ENCODE measurements at regions of chr10 and their contacts with region 1.

Region 1: GRCh38 chr10:6401562-6402348 is 178.3 kb downstream of the PRKCQ start:
- DNase-seq: peak; percentile 85
- CTCF ChIP-seq: peak; percentile 88

Region 2: DNA sequence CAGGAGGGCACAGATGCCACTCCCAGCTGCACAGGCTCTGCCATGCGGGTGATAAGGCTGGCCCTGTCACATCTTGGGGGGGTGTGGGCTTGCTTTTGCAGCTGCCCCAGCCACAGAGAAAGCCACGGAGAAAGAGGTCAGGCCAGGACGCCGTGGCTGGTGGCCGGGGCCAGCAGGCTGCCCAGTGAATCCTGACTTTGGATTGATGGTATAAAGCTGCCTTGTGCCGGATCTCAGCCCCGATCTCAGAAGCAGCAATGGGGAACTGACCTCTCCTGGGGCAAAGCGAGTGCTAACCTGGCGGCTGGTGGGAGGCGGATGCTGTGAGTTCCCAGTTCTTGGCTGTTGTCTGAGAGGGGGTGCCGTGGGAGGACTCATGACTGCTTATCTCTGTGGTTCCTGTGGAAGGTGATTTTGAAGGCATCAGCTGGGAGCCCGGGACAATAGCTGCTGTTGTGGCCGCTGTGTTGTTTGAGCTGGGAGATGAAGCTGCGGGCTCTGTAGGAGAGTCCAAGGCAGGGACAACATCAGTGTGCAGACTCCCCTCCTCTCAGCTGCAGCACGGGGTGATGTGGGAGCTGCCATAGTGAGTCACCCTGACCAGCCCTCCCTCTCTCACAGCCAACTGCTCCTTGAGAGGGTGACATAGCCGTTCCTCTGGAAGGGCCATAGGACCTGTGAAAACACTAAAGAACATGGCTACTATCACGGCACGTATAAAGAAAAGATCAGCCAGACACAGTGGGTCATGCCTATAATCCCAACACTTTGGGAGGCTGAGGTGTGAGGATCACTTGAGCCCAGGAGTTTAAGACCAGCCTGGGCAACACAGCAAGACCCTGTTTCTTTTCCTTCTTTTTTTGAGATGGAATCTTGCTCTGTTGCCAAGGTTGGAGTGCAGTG is 441.4 kb before region 1 on chr10:
- CTCF ChIA-PET with region 1: no interaction called
- POLR2A ChIA-PET with region 1: no interaction called
- DNase-seq: no peak
- CTCF ChIP-seq: no peak

Region 3: GRCh38 chr10:6088721-6089390 is 312.9 kb before region 1 on chr10 and contains the start of gene RBM17:
- CTCF ChIA-PET with region 1: interaction called, 28 read pairs
- POLR2A ChIA-PET with region 1: no interaction called
- DNase-seq: peak; percentile 95
- CTCF ChIP-seq: peak; percentile 100

Region 4: GRCh38 chr10:6151087-6151977 is 250.4 kb before region 1 on chr10:
- CTCF ChIA-PET with region 1: interaction called, 29 read pairs
- POLR2A ChIA-PET with region 1: no interaction called
- DNase-seq: peak; percentile 78
- CTCF ChIP-seq: peak; percentile 71

Region 5: GRCh38 chr10:6195846-6196245 is 205.9 kb before region 1 on chr10:
- CTCF ChIA-PET with region 1: interaction called, 136 read pairs
- POLR2A ChIA-PET with region 1: interaction called, 4 read pairs
- DNase-seq: no peak
- CTCF ChIP-seq: no peak

Region 6: GRCh38 chr10:6218692-6219493 is 182.9 kb before region 1 on chr10:
- CTCF ChIA-PET with region 1: interaction called, 11 read pairs
- POLR2A ChIA-PET with region 1: no interaction called
- DNase-seq: no peak
- CTCF ChIP-seq: no peak

Region 7: DNA sequence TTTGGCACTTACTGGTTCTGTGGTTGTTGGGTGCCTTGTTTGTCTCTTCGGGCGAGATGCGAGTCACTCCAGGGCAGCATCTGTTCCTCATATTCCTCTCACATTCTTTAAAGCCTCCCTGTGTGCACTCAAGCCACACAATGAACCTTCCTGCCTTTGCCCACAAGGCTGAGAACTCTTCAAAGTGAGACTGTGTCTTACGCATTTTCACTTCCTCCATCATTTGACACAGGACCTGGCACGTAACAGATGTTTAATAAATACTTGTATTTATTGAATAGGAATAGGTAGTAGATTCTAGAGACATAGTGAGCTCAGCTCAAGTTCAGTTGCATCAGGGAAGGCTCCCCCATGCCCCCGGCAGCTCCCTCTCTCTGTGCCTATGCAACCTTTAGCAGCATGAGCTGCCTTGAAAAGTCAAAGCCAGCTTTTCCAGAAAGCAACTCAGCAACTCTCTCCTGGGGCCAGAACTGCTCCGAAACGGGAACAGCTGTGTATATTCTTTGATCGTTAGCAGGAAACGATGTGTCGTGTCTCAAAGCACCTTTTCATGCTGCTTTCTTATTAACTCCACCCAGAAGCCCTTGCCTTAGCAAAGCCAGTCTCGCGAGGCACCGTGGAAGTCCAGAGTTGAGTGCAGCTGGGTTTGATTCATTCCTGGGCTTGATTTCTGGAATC is 101.5 kb before region 1 on chr10:
- CTCF ChIA-PET with region 1: interaction called, 14 read pairs
- POLR2A ChIA-PET with region 1: interaction called, 3 read pairs
- DNase-seq: peak; percentile 69
- CTCF ChIP-seq: no peak

Region 8: GRCh38 chr10:6382081-6382480 is 19.7 kb before region 1 on chr10:
- CTCF ChIA-PET with region 1: interaction called, 85 read pairs
- POLR2A ChIA-PET with region 1: no interaction called
- DNase-seq: peak; percentile 39
- CTCF ChIP-seq: no peak